ENCODE measurements at regions of chr1 and their contacts with region 1.

Region 1: GRCh38 chr1:90729504-90730242 is 12.6 kb upstream of the BARHL2 start:
- DNase-seq: no peak
- ATAC-seq: no peak
- H3K4me3 ChIP-seq: peak overlapping the region in 3 of 5 experiments; percentile 1 to 20 (median 20)
- H3K4me3 Mint-ChIP-seq: peak overlapping the region; percentile 78
- H3K27ac ChIP-seq: no peak overlapping the region
- H3K27ac Mint-ChIP-seq: no peak overlapping the region
- H3K4me1 ChIP-seq: peaks cover 40 to 59% of the 10 kb centered on the region in 2 donors
- H3K4me1 Mint-ChIP-seq: peaks cover 42% of the 10 kb centered on the region
- H3K27me3 ChIP-seq: peaks cover 0 to 85% (median 76%) of the 10 kb centered on the region in 4 experiments
- H3K27me3 Mint-ChIP-seq: peaks cover 84% of the 10 kb centered on the region
- CTCF ChIP-seq: no peak

Region 2: GRCh38 chr1:90841473-90841872 is 111.8 kb after region 1 on chr1:
- CTCF ChIA-PET with region 1: no interaction called
- POLR2A ChIA-PET with region 1: no interaction called
- intact Hi-C with region 1: loop called (anchors 2 kb)
- DNase-seq: no peak
- ATAC-seq: no peak
- H3K4me3 ChIP-seq: no peak overlapping the region
- H3K4me3 Mint-ChIP-seq: no peak overlapping the region
- H3K27ac ChIP-seq: no peak overlapping the region
- H3K27ac Mint-ChIP-seq: no peak overlapping the region
- H3K4me1 ChIP-seq: peaks cover 0 to 3% of the 10 kb centered on the region in 2 donors
- H3K4me1 Mint-ChIP-seq: peaks cover 9% of the 10 kb centered on the region
- H3K27me3 ChIP-seq: peaks cover 6 to 44% (median 38%) of the 10 kb centered on the region in 4 experiments
- H3K27me3 Mint-ChIP-seq: peaks cover 74% of the 10 kb centered on the region
- CTCF ChIP-seq: no peak

Region 3: GRCh38 chr1:91724231-91724630 is 994.6 kb after region 1 on chr1:
- CTCF ChIA-PET with region 1: no interaction called
- POLR2A ChIA-PET with region 1: no interaction called
- intact Hi-C with region 1: no loop called
- DNase-seq: no peak
- ATAC-seq: no peak
- H3K4me3 ChIP-seq: no peak overlapping the region
- H3K4me3 Mint-ChIP-seq: no peak overlapping the region
- H3K27ac ChIP-seq: no peak overlapping the region
- H3K27ac Mint-ChIP-seq: no peak overlapping the region
- H3K4me1 ChIP-seq: no peaks in the 10 kb centered on the region
- H3K4me1 Mint-ChIP-seq: no peaks in the 10 kb centered on the region
- H3K27me3 ChIP-seq: no peaks in the 10 kb centered on the region
- H3K27me3 Mint-ChIP-seq: no peaks in the 10 kb centered on the region
- CTCF ChIP-seq: no peak

Measured in B cell (primary cell).